ENCODE measurements at regions of chr20 and their contacts with region 1.

Region 1: DNA sequence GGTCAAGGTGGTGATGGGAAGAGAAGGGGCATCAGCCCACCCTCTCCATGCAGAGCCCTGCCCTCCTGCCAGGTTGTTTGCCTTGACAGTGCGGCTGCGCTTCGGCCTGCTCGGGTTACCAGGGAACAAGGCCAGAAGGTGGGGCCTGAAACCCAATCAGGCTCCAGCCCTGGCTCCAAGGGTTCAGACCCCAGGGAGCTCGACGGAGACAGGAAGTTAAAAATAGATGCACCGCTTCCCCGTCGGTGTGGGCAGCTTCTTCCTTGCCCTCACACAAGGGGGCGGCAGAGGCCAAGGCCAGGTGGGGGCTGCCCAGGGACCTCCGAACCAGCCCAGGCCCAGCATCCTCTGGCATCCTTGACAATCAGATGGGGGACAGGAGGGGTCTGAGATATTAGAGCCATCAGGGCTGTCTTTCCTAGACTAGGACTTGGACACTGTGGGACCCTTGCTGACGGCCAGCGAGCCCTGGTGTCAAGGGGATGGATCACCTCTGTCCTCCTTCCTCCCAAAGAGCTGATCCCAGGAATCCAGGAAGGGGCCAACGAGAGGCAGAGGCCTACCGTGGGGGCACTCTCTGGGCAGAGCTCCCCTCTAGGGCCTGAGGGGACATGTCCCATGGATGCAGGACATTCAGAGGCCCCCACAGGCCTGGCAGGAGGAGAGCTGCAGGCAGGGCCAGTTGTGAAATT is 65.2 kb downstream of the RIPOR3 start:
- H3K4me3 ChIP-seq: no peak overlapping the region
- H3K27ac ChIP-seq: no peak overlapping the region
- H3K4me1 ChIP-seq: no peaks in the 10 kb centered on the region
- CTCF ChIP-seq: peak; percentile 77

Region 2: GRCh38 chr20:50446351-50447101 is 179.6 kb before region 1 on chr20:
- CTCF ChIA-PET with region 1: no interaction called
- POLR2A ChIA-PET with region 1: no interaction called
- H3K4me3 ChIP-seq: no peak overlapping the region
- H3K27ac ChIP-seq: no peak overlapping the region
- H3K4me1 ChIP-seq: no peaks in the 10 kb centered on the region
- CTCF ChIP-seq: no peak

Region 3: DNA sequence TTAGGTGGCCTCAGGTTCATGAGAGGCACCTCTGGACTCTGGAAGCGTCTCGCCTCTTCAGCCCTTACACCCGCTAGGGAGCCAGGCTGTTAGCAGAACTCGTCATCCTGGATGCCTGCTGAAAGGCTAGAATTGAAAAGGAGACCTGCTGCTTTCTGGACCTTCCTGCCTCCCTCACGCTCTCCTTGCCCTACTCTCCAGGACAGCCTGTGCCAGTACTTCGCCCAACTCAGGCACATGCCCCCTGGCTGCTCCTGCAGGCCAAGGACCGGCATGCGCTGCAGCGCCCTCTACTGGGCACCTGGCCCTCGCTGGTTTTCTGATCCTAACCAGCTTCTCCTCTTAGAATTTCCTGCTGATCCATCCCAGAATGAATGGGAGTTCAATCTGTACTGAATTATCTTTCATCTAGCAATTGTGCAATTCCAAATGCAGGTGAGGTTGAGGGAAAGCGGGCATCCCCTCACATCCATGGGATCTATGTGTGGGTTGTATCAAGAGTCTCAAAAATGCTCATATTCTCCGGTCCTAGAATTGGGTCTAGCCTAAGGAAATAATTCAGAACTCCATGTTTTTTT is 38.0 kb before region 1 on chr20:
- CTCF ChIA-PET with region 1: interaction called, 10 read pairs
- POLR2A ChIA-PET with region 1: no interaction called
- H3K4me3 ChIP-seq: no peak overlapping the region
- H3K27ac ChIP-seq: no peak overlapping the region
- H3K4me1 ChIP-seq: no peaks in the 10 kb centered on the region
- CTCF ChIP-seq: peak; percentile 91

Region 4: GRCh38 chr20:50943069-50943468 is 316.9 kb after region 1 on chr20:
- CTCF ChIA-PET with region 1: no interaction called
- POLR2A ChIA-PET with region 1: no interaction called
- H3K4me3 ChIP-seq: no peak overlapping the region
- H3K27ac ChIP-seq: no peak overlapping the region
- H3K4me1 ChIP-seq: no peaks in the 10 kb centered on the region
- CTCF ChIP-seq: no peak

Measured in HEK293 (cell line).